Caco-2 (cell line): ENCODE measurements at regions of chr11 and their contacts with region 1.

Region 1: DNA sequence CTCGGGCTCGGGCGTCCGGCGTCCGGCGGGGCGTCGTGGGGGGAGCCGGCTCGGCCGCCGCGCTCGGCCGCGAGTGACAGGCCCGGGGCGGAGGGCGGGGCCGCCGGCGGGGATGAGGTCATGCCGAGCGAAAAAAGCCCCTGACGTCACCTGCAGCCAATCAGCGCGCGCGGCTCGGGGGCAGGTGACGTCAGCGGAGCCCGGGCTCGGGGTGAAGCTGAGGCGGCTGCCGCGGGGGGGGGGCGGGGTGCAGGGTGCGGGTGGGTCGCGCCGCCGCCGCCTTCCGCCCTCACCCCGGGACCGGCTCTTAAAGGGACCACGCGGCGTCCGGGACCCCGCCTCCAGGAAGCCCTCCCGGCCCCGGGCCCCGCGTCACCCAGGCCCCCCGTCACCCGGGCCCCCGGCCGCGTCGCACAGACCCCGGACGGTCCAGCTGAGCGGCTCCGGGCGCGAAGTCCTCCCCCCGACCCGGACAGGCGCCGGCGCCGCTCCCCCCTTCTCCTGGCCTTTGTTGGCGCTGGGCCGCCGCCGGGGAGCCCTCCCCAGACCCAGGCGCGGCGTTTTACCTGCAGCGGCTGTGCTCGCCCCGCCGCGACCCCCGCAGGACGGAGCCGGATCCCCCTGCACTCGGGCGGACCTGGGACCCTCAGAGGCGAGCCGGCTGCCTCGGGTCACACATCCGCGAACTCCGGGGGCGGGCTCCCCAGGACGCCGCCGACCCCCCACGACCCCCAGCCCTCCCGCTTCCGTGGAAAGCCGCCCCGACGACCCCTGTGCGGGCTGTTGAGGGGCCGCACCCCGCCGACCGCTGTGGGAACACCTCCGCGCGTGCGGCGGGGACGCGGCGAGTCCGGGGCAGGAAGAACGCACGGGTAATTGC is at the start of gene DUSP8:
- DNase-seq: peak; percentile 86 to 93
- H3K4me3 ChIP-seq: peak within 1 kb of the TSS; percentile 57
- H3K4me3 Mint-ChIP-seq: peak within 1 kb of the TSS; percentile 70
- H3K27ac Mint-ChIP-seq: no peak within 1 kb of the TSS
- H3K4me1 ChIP-seq: peaks cover 14% of the 10 kb centered on the region; the same call in 1 of the 2 replicates
- H3K4me1 Mint-ChIP-seq: peaks cover 6% of the 10 kb centered on the region
- H3K27me3 ChIP-seq: peaks cover 2% of the 10 kb centered on the region
- H3K27me3 Mint-ChIP-seq: no peaks in the 10 kb centered on the region
- CTCF ChIP-seq: no peak
- total RNA-seq, gene DUSP8: 7.7 and 12.1 TPM in 2 replicates

Region 2: DNA sequence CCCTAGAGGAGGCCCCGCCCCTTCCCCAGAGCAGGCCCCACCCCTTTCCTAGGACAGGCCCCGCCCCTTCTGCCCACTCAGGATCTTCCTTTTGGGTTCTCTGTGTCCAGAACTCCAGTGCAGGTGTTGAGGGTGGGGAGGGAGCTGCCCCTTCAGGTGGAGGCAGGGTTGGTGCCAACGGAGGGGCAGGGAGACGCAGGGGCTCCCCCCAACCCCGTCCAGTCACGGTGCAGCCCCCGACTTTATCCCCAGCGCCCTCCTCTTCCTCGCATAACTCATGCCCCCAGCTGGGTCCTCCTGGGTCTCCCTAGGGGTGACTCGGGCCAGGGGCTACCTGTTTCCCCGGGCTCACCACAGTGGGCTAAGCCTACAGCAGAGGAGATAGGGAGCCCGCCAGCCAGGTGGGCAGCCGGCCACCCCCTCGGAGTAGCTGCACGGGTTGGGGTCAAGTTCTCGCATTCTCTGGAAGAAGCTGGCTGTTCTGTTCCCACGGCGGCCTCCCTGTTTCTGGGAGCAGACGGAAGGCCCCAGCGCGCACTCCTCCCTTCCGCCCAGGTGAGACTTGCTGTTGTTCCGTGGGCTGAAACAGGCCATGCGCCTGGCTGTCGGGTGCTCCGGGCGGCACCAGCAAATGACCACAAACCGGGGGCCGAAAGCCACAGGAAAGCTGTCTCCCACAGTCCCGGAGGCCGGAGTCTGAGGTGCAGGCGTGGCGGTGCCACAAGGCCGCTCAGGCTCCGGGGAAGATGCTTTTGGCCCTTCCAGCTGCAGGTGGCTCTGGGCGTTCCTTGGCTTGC is 458.8 kb before region 1 on chr11:
- CTCF ChIA-PET with region 1: no interaction called
- POLR2A ChIA-PET with region 1: no interaction called
- intact Hi-C with region 1: loop called (anchors 5 kb)
- DNase-seq: peak in 1 of 2 experiments; percentile 32
- H3K4me3 ChIP-seq: no peak overlapping the region
- H3K4me3 Mint-ChIP-seq: no peak overlapping the region
- H3K27ac Mint-ChIP-seq: no peak overlapping the region
- H3K4me1 ChIP-seq: no peaks in the 10 kb centered on the region
- H3K4me1 Mint-ChIP-seq: peaks cover 7% of the 10 kb centered on the region
- H3K27me3 ChIP-seq: no peaks in the 10 kb centered on the region
- H3K27me3 Mint-ChIP-seq: peaks cover 3% of the 10 kb centered on the region
- CTCF ChIP-seq: no peak

Region 3: GRCh38 chr11:1546536-1547400 is 25.7 kb before region 1 on chr11:
- CTCF ChIA-PET with region 1: interaction called, 138 read pairs
- POLR2A ChIA-PET with region 1: interaction called, 4 read pairs
- intact Hi-C with region 1: loop called (anchors 1 kb)
- DNase-seq: peak in 1 of 2 experiments; percentile 75
- H3K4me3 ChIP-seq: peak overlapping the region; percentile 48
- H3K4me3 Mint-ChIP-seq: peak overlapping the region; percentile 70
- H3K27ac Mint-ChIP-seq: no peak overlapping the region
- H3K4me1 ChIP-seq: peaks cover 13% of the 10 kb centered on the region
- H3K4me1 Mint-ChIP-seq: no peaks in the 10 kb centered on the region
- H3K27me3 ChIP-seq: peaks cover 2% of the 10 kb centered on the region; the same call in 1 of the 2 replicates
- H3K27me3 Mint-ChIP-seq: peaks cover 2% of the 10 kb centered on the region
- CTCF ChIP-seq: peak; percentile 58 to 78

Region 4: GRCh38 chr11:1553808-1554594 is 18.4 kb before region 1 on chr11:
- CTCF ChIA-PET with region 1: interaction called, 21 read pairs
- POLR2A ChIA-PET with region 1: no interaction called
- intact Hi-C with region 1: loop called (anchors 1 kb)
- DNase-seq: peak; percentile 88 to 93
- H3K4me3 ChIP-seq: no peak overlapping the region
- H3K4me3 Mint-ChIP-seq: peak overlapping the region; percentile 42
- H3K27ac Mint-ChIP-seq: peak overlapping the region; percentile 61
- H3K4me1 ChIP-seq: peaks cover 13% of the 10 kb centered on the region
- H3K4me1 Mint-ChIP-seq: peaks cover 8% of the 10 kb centered on the region
- H3K27me3 ChIP-seq: no peaks in the 10 kb centered on the region
- H3K27me3 Mint-ChIP-seq: no peaks in the 10 kb centered on the region
- CTCF ChIP-seq: peak; percentile 61 to 69

Region 5: GRCh38 chr11:1598816-1599215 is 26.4 kb after region 1 on chr11:
- CTCF ChIA-PET with region 1: interaction called, 21 read pairs
- POLR2A ChIA-PET with region 1: no interaction called
- intact Hi-C with region 1: no loop called
- DNase-seq: no peak
- H3K4me3 ChIP-seq: no peak overlapping the region
- H3K4me3 Mint-ChIP-seq: no peak overlapping the region
- H3K27ac Mint-ChIP-seq: no peak overlapping the region
- H3K4me1 ChIP-seq: no peaks in the 10 kb centered on the region
- H3K4me1 Mint-ChIP-seq: no peaks in the 10 kb centered on the region
- H3K27me3 ChIP-seq: no peaks in the 10 kb centered on the region; the same call in 1 of the 2 replicates
- H3K27me3 Mint-ChIP-seq: peaks cover 22% of the 10 kb centered on the region
- CTCF ChIP-seq: no peak